ENCODE measurements at regions of chr3 and their contacts with region 1.

Region 1: DNA sequence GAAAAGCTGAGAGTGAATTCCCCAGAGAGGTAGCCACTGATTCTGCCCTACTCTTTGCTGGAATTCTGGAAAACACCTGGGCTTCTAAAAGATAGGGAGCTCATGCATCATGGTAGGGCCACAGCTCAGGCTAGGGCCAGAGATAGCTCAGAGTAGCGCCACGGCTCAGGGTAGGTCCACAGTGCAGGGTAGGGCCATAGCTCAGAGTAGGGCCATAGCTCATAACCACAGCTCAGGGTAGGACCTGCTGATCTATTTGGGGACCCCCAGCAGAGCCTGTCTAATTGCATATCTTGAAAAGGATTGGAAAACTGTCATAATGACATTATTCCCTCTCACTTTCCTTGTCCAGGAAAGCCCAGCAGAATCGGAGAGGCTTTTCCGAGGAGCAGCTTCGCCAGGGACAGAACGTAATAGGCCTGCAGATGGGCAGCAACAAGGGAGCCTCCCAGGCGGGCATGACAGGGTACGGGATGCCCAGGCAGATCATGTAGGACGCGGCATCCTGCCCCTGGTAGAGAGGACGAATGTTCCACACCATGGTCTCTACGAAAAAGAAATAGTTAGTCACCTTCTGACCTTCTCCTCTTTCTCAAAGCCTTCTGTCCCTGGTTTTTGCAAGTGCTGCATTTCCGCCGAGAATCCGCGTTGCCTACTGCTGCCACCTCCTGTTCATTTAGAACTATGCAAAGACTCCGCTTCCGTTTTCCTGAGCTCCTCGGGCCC is 14.5 kb downstream of the TAGLN3 start:
- DNase-seq: peak; percentile 56 to 79
- ATAC-seq: peak; percentile 90 to 96
- H3K4me3 ChIP-seq: no peak overlapping the region
- H3K27ac ChIP-seq: peak overlapping the region in 1 of 2 experiments; percentile 58; a peak in 3 of 6 replicates
- H3K4me1 ChIP-seq: 0 out of 3 replicates have a peak, but pooled peaks cover 5% of the 10 kb centered on the region
- CTCF ChIP-seq: peak; percentile 88
- EP300 ChIP-seq: no peak
- POLR2A ChIP-seq: no peak
- RAD21 ChIP-seq: peak; percentile 82 to 85

Region 2: DNA sequence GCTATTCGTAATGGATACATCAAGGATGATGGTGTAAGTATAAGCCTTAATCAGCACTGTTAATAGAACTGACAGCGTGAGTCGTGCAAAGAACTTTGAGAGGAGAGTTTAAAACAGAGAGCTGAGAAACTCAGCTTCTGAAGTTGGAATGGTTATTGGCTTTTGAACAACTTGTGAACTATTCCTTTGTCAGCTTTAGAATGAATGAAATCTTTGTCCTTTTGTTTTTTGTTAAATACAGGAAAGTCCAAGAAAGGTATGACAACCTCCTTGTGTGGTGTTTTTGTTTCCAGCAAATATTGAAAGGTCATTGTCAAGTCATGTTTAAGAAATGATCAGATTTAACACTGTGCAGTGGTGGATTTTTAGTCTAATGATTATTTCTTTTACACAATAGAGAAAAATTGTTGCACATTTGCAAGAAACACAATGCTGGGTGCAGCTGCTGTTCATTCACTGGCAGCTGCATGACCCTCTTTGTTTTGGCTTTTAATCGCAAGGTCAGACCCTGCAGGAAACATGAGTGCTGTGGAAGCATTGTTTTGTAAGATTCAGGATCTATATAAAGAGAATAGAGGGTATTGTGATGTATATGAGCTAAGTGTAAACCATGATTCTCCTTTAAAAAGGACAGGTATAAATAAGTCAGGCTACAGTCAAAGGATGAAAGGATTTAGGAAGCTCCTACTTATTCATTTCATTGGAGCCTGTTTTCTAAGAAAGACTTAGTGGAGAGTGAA is 56.1 kb before region 1 on chr3:
- CTCF ChIA-PET with region 1: interaction called, 11 read pairs
- POLR2A ChIA-PET with region 1: no interaction called
- DNase-seq: no peak
- ATAC-seq: no peak
- H3K4me3 ChIP-seq: no peak overlapping the region
- H3K27ac ChIP-seq: no peak overlapping the region
- H3K4me1 ChIP-seq: no peaks in the 10 kb centered on the region
- CTCF ChIP-seq: no peak
- EP300 ChIP-seq: no peak
- POLR2A ChIP-seq: no peak
- RAD21 ChIP-seq: no peak

Region 3: DNA sequence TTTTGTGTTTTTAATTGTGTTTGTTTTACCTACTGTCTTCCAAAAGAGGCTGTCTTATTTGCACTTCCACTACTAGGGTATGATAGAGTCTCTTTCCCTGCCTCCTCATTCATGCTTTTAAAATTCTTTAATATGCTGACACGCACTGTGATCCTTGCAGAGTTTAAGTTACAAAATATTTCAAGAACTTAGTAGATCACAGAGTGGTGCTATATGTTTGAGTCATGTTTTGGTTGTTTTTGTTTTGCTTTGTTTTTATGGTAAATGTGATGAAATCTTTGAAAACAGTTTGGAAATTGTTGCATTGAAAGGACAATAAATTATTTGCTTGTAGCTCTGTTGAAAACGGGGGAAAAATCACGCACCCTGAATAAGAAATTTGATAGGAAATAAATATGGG is 40.3 kb before region 1 on chr3:
- CTCF ChIA-PET with region 1: interaction called, 16 read pairs
- POLR2A ChIA-PET with region 1: no interaction called
- DNase-seq: no peak
- ATAC-seq: no peak
- H3K4me3 ChIP-seq: no peak overlapping the region
- H3K27ac ChIP-seq: no peak overlapping the region
- H3K4me1 ChIP-seq: peaks cover 9% of the 10 kb centered on the region; the same call in 2 of the 3 replicates
- CTCF ChIP-seq: no peak
- EP300 ChIP-seq: no peak
- POLR2A ChIP-seq: no peak
- RAD21 ChIP-seq: no peak

Region 4: DNA sequence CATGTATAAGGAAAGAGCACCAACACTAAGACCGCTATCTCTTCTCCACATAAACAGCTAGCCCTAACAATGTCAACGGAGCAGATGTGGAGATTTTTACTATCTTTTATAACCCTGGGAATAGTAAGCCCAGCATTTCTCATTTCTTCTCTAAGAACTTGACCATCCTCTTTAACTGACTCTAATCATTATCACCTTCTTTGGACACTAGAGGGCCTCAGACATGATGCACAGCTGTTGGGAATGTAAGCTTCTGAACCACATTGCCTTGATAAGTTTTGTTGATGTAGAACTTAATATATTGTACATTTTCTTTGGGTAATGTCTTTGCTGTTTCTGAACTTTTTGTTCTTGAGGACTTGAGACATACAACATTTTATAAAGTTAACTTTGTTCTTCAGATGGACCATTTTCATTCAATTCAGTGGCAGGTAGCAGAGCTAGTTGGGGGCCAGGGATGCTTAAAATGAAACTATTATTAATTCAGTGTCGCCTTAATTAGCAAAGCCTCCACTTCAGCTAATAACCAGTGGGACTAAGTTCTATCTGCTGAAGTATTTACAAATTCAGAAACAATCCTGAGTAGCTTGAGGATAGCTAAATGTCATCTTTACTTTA is 24.1 kb before region 1 on chr3:
- CTCF ChIA-PET with region 1: interaction called, 189 read pairs
- POLR2A ChIA-PET with region 1: no interaction called
- DNase-seq: peak; percentile 49 to 71
- ATAC-seq: peak; percentile 94 to 97
- H3K4me3 ChIP-seq: no peak overlapping the region
- H3K27ac ChIP-seq: no peak overlapping the region
- H3K4me1 ChIP-seq: peaks cover 2% of the 10 kb centered on the region; the same call in 1 of the 3 replicates
- CTCF ChIP-seq: peak; percentile 81
- EP300 ChIP-seq: no peak
- POLR2A ChIP-seq: no peak
- RAD21 ChIP-seq: peak; percentile 57 to 59

Region 5: DNA sequence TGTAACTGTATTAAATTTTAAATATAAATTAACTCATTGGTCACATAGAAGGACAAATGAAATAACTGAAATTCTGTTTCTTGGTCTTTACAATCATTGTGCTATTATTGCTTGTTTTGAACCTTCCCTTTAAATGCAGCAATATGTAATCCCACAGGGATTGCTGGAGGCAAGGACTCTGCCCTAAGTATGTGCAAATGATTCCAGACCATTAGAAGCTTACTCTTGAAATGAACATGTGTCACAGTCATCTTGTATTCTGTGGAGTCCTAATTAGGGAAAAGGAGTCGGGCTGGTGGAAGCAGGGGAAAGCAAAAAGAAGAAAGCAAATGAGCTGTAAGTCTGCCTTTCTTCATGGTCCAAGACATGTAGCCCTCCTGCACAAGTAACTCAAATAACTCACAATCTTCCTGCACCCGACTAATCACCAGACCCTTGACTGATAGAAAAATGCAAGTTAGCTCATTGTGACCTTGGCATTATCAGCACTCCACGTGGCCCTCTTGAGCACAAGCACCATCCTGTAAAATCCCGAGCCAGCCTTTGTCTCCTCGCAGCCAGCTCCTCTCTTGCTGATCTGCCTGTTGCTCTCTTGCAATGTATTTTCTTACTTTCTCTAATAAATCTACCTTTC is 19.0 kb after region 1 on chr3:
- CTCF ChIA-PET with region 1: interaction called, 10 read pairs
- POLR2A ChIA-PET with region 1: no interaction called
- DNase-seq: no peak
- ATAC-seq: no peak
- H3K4me3 ChIP-seq: no peak overlapping the region
- H3K27ac ChIP-seq: no peak overlapping the region
- H3K4me1 ChIP-seq: no peaks in the 10 kb centered on the region
- CTCF ChIP-seq: no peak
- EP300 ChIP-seq: no peak
- POLR2A ChIP-seq: no peak
- RAD21 ChIP-seq: no peak

Region 6: GRCh38 chr3:112120485-112120836 is 107.2 kb after region 1 on chr3:
- CTCF ChIA-PET with region 1: no interaction called
- POLR2A ChIA-PET with region 1: no interaction called
- DNase-seq: no peak
- ATAC-seq: no peak
- H3K4me3 ChIP-seq: no peak overlapping the region
- H3K27ac ChIP-seq: no peak overlapping the region
- H3K4me1 ChIP-seq: no peaks in the 10 kb centered on the region
- CTCF ChIP-seq: no peak
- EP300 ChIP-seq: no peak
- POLR2A ChIP-seq: no peak
- RAD21 ChIP-seq: no peak

Region 7: GRCh38 chr3:112379020-112379690 is 365.9 kb after region 1 on chr3:
- CTCF ChIA-PET with region 1: no interaction called
- POLR2A ChIA-PET with region 1: no interaction called
- DNase-seq: no peak
- ATAC-seq: no peak
- H3K4me3 ChIP-seq: no peak overlapping the region
- H3K27ac ChIP-seq: no peak overlapping the region
- H3K4me1 ChIP-seq: no peaks in the 10 kb centered on the region
- CTCF ChIP-seq: no peak
- EP300 ChIP-seq: no peak
- POLR2A ChIP-seq: no peak
- RAD21 ChIP-seq: no peak

Measured in A549 (cell line).